CD14-positive monocyte (primary cell): ENCODE measurements at regions of chr11 and their contacts with region 1.

Region 1: GRCh38 chr11:119666463-119667131 is 62.4 kb downstream of the NECTIN1 start:
- DNase-seq: peak; percentile 66 to 77 (median 70)
- H3K4me3 ChIP-seq: no peak overlapping the region
- H3K4me3 Mint-ChIP-seq: no peak overlapping the region
- H3K27ac ChIP-seq: no peak overlapping the region
- H3K27ac Mint-ChIP-seq: no peak overlapping the region
- H3K4me1 ChIP-seq: no peaks in the 10 kb centered on the region
- H3K4me1 Mint-ChIP-seq: peaks cover 5% of the 10 kb centered on the region
- H3K27me3 ChIP-seq: no peaks in the 10 kb centered on the region
- H3K27me3 Mint-ChIP-seq: peaks cover 0 to 9% (median 1%) of the 10 kb centered on the region in 3 donors
- CTCF ChIP-seq: peak; percentile 96

Region 2: DNA sequence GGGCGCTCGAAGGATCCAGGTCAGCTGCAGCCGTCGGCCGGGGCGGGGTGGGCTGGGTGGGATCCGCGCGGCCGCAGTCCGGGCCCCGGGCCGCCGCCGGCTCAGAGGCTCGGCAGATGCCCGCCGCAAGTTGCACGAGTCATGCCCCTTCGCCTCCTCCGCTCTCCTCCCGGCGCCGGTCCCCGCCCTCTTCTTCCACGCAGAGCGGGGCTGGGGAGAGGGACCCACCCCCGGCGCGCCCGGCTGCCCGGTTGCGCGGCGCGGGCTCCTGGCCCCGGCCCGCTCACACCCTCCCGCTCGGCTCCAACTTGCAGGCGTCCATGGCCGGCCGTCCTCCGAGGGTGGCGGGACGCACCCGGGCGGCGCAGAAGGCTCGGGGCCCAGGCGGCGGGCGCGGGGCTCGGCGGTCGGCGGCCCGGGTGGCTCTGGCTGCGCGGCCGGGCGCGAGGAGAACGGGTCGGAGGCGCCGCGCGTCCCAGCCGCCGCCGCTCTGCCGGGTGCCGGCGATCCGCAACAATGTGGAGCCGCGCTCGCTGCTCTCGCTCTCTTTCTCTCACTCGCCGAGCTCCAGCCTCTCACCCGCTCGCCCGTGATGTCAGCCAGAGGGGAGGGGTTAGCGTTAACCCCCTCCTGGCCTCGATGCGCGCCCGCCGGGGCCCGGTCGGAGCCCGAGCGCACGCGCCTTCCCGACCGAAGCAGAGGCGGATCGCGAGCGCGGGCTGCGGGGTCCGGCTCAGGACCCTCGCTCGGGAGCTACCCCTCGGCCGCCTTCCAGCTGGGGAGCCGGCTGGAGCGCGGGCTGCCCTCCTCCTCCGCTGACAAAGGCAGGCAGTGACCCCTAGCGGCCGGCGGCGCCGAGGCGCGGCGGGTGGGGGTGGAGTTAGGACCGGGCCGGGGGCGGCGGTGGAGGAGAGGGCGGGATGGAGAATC is 62.3 kb after region 1 on chr11 and contains the start of gene NECTIN1:
- intact Hi-C with region 1: loop called (anchors 2 kb)
- DNase-seq: peak; percentile 69
- H3K4me3 ChIP-seq: peak within 1 kb of the TSS; percentile 55 to 88 (median 62)
- H3K4me3 Mint-ChIP-seq: peak within 1 kb of the TSS; percentile 94 to 98
- H3K27ac ChIP-seq: peak within 1 kb of the TSS in 1 of 2 donors; percentile 75
- H3K27ac Mint-ChIP-seq: peak within 1 kb of the TSS in 5 of 7 donors; percentile 24 to 89 (median 81)
- H3K4me1 ChIP-seq: peaks cover 32 to 35% of the 10 kb centered on the region in 2 donors
- H3K4me1 Mint-ChIP-seq: peaks cover 34% of the 10 kb centered on the region
- H3K27me3 ChIP-seq: peaks cover 0 to 17% of the 10 kb centered on the region in 2 donors
- H3K27me3 Mint-ChIP-seq: peaks cover 12 to 35% (median 20%) of the 10 kb centered on the region in 3 donors
- CTCF ChIP-seq: peak; percentile 99
- polyA plus RNA-seq, gene NECTIN1: 0.53 to 8.3 (median 0.85) TPM

Region 3: DNA sequence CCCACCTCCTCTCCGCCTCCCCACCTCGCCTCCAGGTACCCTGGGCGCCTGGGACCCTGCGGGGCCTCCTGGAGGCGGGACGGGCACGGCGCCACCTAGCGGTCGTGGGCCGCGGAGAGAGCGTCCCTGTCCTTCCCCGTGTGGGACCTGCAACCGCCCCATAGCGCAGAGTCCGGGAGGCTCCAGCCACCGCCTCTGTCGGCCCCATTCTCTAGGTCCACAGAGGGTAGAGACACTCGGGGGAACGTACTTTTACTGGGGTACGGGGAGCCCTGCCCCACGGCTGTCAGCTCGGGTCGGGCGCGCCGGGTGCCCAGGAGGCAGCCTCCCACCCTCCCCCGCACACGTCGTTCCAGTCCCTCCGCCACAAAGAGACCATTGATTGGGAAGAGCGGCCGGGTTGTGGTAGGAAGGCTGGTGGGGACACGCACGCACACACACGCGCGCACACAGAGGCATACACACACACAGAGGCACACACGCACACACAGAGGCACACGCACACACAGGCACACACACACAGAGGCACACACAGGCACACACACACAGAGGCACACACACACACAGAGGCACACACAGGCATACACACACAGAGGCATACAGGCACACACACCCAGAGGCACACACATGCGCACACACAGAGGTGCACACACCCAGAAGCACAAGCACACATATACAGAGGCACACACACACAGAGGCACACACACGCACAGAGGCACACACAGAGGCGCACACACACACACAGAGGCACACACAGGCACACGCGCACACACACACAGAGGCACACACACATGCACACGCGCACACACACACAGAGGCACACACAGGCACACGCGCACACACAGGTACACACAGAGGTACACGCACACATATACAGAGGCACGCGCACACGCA is 75.0 kb after region 1 on chr11:
- intact Hi-C with region 1: loop called (anchors 2 kb)
- DNase-seq: peak; percentile 24 to 55 (median 46)
- H3K4me3 ChIP-seq: no peak overlapping the region
- H3K4me3 Mint-ChIP-seq: peak overlapping the region in 1 of 2 donors; percentile 80
- H3K27ac ChIP-seq: no peak overlapping the region
- H3K27ac Mint-ChIP-seq: no peak overlapping the region
- H3K4me1 ChIP-seq: no peaks in the 10 kb centered on the region
- H3K4me1 Mint-ChIP-seq: peaks cover 3% of the 10 kb centered on the region
- H3K27me3 ChIP-seq: peaks cover 17 to 39% of the 10 kb centered on the region in 2 donors
- H3K27me3 Mint-ChIP-seq: peaks cover 32 to 58% (median 48%) of the 10 kb centered on the region in 3 donors
- CTCF ChIP-seq: peak; percentile 94

Region 4: GRCh38 chr11:120079750-120080490 is 413.3 kb after region 1 on chr11:
- intact Hi-C with region 1: loop called in 1 of 2 experiments (anchors 5 kb)
- DNase-seq: peak in 1 of 3 donors; percentile 13
- H3K4me3 ChIP-seq: no peak overlapping the region
- H3K4me3 Mint-ChIP-seq: no peak overlapping the region
- H3K27ac ChIP-seq: no peak overlapping the region
- H3K27ac Mint-ChIP-seq: no peak overlapping the region
- H3K4me1 ChIP-seq: no peaks in the 10 kb centered on the region
- H3K4me1 Mint-ChIP-seq: no peaks in the 10 kb centered on the region
- H3K27me3 ChIP-seq: no peaks in the 10 kb centered on the region
- H3K27me3 Mint-ChIP-seq: peaks cover 8 to 16% (median 8%) of the 10 kb centered on the region in 3 donors
- CTCF ChIP-seq: peak; percentile 85

Region 5: GRCh38 chr11:120108154-120108865 is 441.7 kb after region 1 on chr11:
- intact Hi-C with region 1: loop called (anchors 1 to 2 kb)
- DNase-seq: peak; percentile 21 to 43 (median 41)
- H3K4me3 ChIP-seq: no peak overlapping the region
- H3K4me3 Mint-ChIP-seq: no peak overlapping the region
- H3K27ac ChIP-seq: no peak overlapping the region
- H3K27ac Mint-ChIP-seq: no peak overlapping the region
- H3K4me1 ChIP-seq: no peaks in the 10 kb centered on the region
- H3K4me1 Mint-ChIP-seq: peaks cover 2% of the 10 kb centered on the region
- H3K27me3 ChIP-seq: no peaks in the 10 kb centered on the region
- H3K27me3 Mint-ChIP-seq: peaks cover 17 to 24% (median 19%) of the 10 kb centered on the region in 3 donors
- CTCF ChIP-seq: peak; percentile 99